Activated CD4-positive, alpha-beta T cell treated with anti-CD3 and anti-CD28 coated beads, Interleukin-2, amount 10 ng/mL, durations not matched to agents 24 days and 14 days (primary cell): ENCODE measurements at regions of chr2 and their contacts with region 1.

Region 1: DNA sequence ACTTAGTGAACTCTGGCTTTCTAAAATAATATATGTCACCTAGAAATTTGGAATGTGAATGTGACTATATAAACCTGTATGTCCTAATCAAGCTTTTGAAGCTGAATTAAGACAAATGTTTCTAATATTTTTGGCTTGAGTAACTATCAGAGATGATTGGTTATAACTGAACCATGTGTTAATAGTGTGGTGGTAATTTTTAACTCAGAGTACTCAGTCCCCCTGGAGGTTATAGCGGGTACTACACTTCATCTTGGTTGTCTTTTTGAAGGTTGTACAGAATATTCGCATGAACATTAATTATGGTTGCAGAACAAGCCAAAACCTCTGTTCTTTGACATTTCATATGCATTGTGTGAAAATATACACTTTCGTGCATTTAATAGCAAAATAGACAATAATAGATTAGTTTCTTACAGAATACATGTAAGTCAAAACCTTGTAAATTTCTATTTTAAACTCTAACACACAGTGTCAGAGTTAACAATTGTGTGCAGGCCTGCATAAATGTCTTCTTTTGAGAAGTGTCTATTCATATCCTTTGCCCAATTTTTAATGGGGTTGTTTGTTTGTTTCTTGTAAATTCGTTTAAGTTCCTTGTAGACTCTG is 86.0 kb downstream of the OSBPL6 start:
- DNase-seq: peak; percentile 84
- H3K4me3 Mint-ChIP-seq: no peak overlapping the region
- H3K27ac Mint-ChIP-seq: no peak overlapping the region
- H3K4me1 Mint-ChIP-seq: no peaks in the 10 kb centered on the region
- H3K27me3 Mint-ChIP-seq: peaks cover 24% of the 10 kb centered on the region

Region 2: GRCh38 chr2:178193823-178194599 is 86.3 kb before region 1 on chr2 and contains the start of gene OSBPL6:
- intact Hi-C with region 1: loop called (anchors 10 kb)
- DNase-seq: peak; percentile 94
- H3K4me3 Mint-ChIP-seq: peak within 1 kb of the TSS; percentile 80
- H3K27ac Mint-ChIP-seq: no peak within 1 kb of the TSS
- H3K4me1 Mint-ChIP-seq: peaks cover 8% of the 10 kb centered on the region
- H3K27me3 Mint-ChIP-seq: peaks cover 55% of the 10 kb centered on the region
- total RNA-seq, gene OSBPL6: 1.1 and 1.5 TPM in 2 replicates